ENCODE measurements at regions of chr6 and their contacts with region 1.

Region 1: GRCh38 chr6:46221222-46221793 is 50.5 kb upstream of the ENPP5 start:
- DNase-seq: peak; percentile 47
- H3K4me3 Mint-ChIP-seq: no peak overlapping the region
- H3K27ac Mint-ChIP-seq: no peak overlapping the region
- H3K4me1 Mint-ChIP-seq: peaks cover 5% of the 10 kb centered on the region
- H3K27me3 Mint-ChIP-seq: no peaks in the 10 kb centered on the region
- CTCF ChIP-seq: peak; percentile 65

Region 2: GRCh38 chr6:45930420-45931040 is 290.8 kb before region 1 on chr6:
- CTCF ChIA-PET with region 1: interaction called, 12 read pairs
- POLR2A ChIA-PET with region 1: no interaction called
- intact Hi-C with region 1: no loop called
- DNase-seq: peak; percentile 69
- H3K4me3 Mint-ChIP-seq: no peak overlapping the region
- H3K27ac Mint-ChIP-seq: no peak overlapping the region
- H3K4me1 Mint-ChIP-seq: no peaks in the 10 kb centered on the region
- H3K27me3 Mint-ChIP-seq: peaks cover 26% of the 10 kb centered on the region
- CTCF ChIP-seq: peak; percentile 93

Region 3: GRCh38 chr6:46042355-46042999 is 178.8 kb before region 1 on chr6:
- CTCF ChIA-PET with region 1: no interaction called
- POLR2A ChIA-PET with region 1: no interaction called
- intact Hi-C with region 1: loop called (anchors 2 kb)
- DNase-seq: peak; percentile 70
- H3K4me3 Mint-ChIP-seq: no peak overlapping the region
- H3K27ac Mint-ChIP-seq: no peak overlapping the region
- H3K4me1 Mint-ChIP-seq: peaks cover 6% of the 10 kb centered on the region
- H3K27me3 Mint-ChIP-seq: no peaks in the 10 kb centered on the region
- CTCF ChIP-seq: peak; percentile 47